IMR-90 (cell line): ENCODE measurements at regions of chr2 and their contacts with region 1.

Region 1: GRCh38 chr2:226118471-226119430 is 680.9 kb downstream of the IRS1 start:
- DNase-seq: peak; percentile 91
- ATAC-seq: peak; percentile 42
- H3K4me3 ChIP-seq: peak overlapping the region; percentile 6; the same call in 1 of the 2 replicates
- H3K27ac ChIP-seq: peak overlapping the region; percentile 92
- H3K4me1 ChIP-seq: peaks cover 8% of the 10 kb centered on the region
- H3K27me3 ChIP-seq: no peaks in the 10 kb centered on the region
- CTCF ChIP-seq: no peak
- POLR2A ChIP-seq: no peak
- RAD21 ChIP-seq: no peak; the same call in 1 of the 2 replicates

Region 2: DNA sequence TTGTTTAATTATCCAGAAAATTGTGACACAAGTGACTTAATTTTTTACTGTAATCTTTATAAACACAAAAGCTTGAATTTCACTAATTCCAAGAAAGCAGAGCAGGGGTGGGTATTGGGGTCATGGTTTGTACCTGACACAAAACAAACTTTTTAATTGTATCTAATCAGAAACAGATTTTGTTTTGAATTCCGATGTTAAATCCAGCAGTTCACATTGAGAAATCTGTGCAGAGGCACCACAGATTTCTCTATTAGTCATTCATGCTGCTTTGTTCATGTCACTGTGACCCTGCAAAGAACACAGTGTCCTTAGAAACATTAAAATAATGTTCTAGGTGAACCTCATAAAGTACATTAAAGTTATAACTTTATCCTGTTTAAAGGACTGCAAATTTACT is 275.8 kb before region 1 on chr2:
- CTCF ChIA-PET with region 1: no interaction called
- POLR2A ChIA-PET with region 1: no interaction called
- dilution Hi-C with region 1: no loop called
- in situ Hi-C with region 1: no loop called
- intact Hi-C with region 1: loop called (anchors 5 kb)
- DNase-seq: peak; percentile 27
- ATAC-seq: peak; percentile 72
- H3K4me3 ChIP-seq: no peak overlapping the region
- H3K27ac ChIP-seq: no peak overlapping the region
- H3K4me1 ChIP-seq: peaks cover 2% of the 10 kb centered on the region; the same call in 1 of the 2 replicates
- H3K27me3 ChIP-seq: no peaks in the 10 kb centered on the region
- CTCF ChIP-seq: no peak
- POLR2A ChIP-seq: no peak
- RAD21 ChIP-seq: no peak

Region 3: DNA sequence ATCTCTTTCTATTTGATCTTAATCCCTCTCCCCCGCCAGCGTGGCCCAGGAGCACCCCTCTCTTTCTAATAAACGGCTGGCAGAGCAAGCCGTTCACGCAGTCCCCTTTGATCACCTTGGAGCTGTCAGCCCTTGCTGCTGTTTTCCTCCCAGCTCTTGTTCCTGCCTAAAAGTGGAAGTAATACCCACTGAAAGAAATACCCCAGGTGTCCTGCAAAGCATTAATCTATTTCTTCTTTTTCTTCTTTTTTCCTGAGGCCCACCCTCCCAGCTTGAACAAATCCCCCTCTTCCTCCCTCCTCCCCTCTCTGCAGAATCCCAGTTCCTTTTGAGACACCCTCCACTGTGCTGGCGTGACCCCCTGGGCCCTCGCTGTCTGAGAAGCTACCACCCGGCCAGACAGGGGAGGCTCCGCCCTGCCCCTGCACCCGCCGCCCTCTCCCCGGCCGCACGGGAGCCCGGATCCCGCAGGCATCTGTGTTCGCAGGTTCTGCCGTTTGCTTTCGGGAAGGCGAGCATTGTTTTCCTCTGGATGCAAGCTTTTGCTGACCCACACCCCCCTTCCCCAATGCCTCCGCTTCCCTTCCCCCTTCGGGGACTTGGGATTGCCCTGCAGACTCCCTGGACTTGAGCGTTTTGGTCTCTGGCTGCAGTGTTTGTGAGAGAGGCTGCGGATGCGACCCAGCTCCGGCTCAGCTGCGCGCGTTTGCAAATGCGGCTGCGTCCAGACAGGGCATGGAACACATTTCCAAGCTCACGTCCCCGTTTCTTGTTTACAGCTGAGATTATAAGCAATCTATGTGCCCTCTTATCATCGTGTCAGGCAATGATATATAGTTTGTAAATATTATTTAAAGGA is 87.7 kb before region 1 on chr2:
- CTCF ChIA-PET with region 1: interaction called, 3 read pairs
- POLR2A ChIA-PET with region 1: no interaction called
- dilution Hi-C with region 1: no loop called
- in situ Hi-C with region 1: no loop called
- intact Hi-C with region 1: loop called (anchors 5 kb)
- DNase-seq: peak; percentile 69
- ATAC-seq: peak; percentile 92
- H3K4me3 ChIP-seq: peak overlapping the region; percentile 52
- H3K27ac ChIP-seq: peak overlapping the region; percentile 89
- H3K4me1 ChIP-seq: peaks cover 6% of the 10 kb centered on the region
- H3K27me3 ChIP-seq: no peaks in the 10 kb centered on the region
- CTCF ChIP-seq: no peak
- POLR2A ChIP-seq: no peak
- RAD21 ChIP-seq: peak; percentile 33

Region 4: DNA sequence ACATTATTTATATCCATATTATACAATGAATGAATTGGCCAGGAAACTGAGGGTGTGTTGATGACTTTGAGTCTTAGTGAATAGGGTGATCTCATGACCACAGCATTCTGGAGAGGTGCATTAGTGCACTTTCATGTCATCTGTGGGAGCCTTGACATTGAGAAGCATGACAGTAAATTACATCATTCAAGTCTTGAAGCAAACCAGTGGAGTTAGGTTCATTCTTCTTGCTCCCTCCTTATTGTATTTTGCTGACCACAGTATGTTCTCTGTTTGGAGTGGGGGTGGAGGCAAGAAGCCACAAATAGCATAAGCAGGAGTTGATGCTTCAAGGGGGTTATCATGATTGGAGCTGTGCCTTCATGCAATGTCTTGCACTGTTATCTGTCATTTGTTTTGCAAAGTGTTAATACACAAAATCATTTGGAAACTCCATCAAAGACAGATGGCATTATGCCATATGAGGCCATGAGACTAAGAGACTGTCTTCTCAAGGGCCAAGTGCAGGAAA is 39.0 kb before region 1 on chr2:
- CTCF ChIA-PET with region 1: no interaction called
- POLR2A ChIA-PET with region 1: no interaction called
- dilution Hi-C with region 1: no loop called
- in situ Hi-C with region 1: no loop called
- intact Hi-C with region 1: loop called (anchors 5 kb)
- DNase-seq: peak; percentile 98
- ATAC-seq: peak; percentile 70
- H3K4me3 ChIP-seq: no peak overlapping the region
- H3K27ac ChIP-seq: peak overlapping the region; percentile 81
- H3K4me1 ChIP-seq: peaks cover 12% of the 10 kb centered on the region
- H3K27me3 ChIP-seq: no peaks in the 10 kb centered on the region
- CTCF ChIP-seq: no peak
- POLR2A ChIP-seq: no peak
- RAD21 ChIP-seq: no peak

Region 5: DNA sequence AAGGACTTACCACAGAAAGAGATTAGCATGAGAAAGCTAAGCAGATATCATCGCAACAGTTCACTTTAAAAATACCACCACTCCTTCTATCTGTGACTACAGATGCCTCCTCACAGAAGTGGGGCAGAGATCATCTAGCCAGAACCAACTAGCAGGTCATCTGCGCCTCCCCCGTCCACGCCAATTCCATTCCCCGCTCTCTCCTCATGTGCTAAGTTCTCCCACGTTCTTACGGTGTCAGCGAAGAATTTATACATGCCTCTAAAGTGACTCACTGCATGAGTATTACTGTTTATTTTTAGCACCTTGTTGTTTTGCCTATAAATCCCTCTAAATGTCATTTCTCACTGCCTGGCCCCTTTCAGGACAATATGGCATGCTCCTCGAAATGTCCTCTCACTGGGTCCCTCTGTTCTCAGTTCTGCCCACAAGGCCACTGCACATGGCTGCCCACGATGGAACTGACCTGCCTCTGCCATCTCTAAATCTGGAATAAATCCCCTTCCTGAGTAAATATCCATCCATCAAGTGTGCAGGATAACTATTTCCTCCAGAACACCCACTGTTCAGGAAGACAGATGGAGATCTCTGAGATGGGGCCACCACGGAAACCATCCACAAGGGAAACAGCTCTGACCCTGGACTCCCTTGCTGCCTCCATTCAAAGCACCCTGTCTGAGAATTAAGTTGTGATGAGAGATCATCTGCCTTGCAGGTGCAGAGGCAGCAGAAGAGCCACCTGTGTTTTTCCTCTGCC is 543.2 kb after region 1 on chr2:
- CTCF ChIA-PET with region 1: no interaction called
- POLR2A ChIA-PET with region 1: interaction called, 4 read pairs
- dilution Hi-C with region 1: no loop called
- in situ Hi-C with region 1: no loop called
- intact Hi-C with region 1: loop called (anchors 5 kb)
- DNase-seq: peak; percentile 93
- ATAC-seq: peak; percentile 81
- H3K4me3 ChIP-seq: no peak overlapping the region
- H3K27ac ChIP-seq: peak overlapping the region; percentile 56; the same call in 1 of the 2 replicates
- H3K4me1 ChIP-seq: peaks cover 10% of the 10 kb centered on the region
- H3K27me3 ChIP-seq: no peaks in the 10 kb centered on the region
- CTCF ChIP-seq: no peak
- POLR2A ChIP-seq: no peak
- RAD21 ChIP-seq: no peak; the same call in 1 of the 2 replicates